Activated CD4-positive, alpha-beta memory T cell treated with anti-CD3 and anti-CD28 coated beads for 36 hours (primary cell): ENCODE measurements at regions of chr6 and their contacts with region 1.

Region 1: GRCh38 chr6:87210979-87211378 is 55.6 kb downstream of the ZNF292 start:
- DNase-seq: peak; percentile 68
- H3K4me3 Mint-ChIP-seq: no peak overlapping the region
- H3K27ac Mint-ChIP-seq: peak overlapping the region; percentile 79
- H3K4me1 Mint-ChIP-seq: peaks cover 71% of the 10 kb centered on the region
- H3K27me3 Mint-ChIP-seq: no peaks in the 10 kb centered on the region

Region 2: DNA sequence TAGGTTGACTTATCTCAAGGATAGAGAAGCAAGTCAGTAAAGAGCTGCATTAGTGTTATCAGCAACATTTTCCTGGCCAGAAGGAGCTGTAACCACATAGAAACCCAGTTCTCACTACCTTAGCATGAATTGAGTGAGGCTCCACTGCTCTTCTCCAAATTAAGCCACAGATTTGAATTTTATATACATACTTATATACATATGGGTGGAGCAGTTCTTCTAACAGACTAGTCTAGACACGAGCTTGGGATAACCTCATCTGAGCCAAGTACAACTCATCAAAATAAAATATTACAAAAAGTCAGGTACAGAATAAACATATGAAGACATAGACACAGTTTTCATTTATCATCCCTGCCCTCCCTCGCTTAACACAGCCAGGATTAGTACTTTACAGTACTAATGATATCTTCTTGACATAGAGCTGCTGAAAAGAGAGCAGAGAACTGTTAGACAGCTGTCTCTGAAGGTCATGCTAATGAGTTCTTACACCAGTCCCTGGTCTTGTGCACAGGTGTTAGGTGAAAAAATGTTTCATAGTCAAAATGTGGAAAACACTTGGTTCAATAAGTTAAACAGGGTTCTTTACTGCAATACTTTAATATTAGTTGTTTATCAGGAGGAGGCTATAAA is 421.1 kb before region 1 on chr6:
- CTCF ChIA-PET with region 1: no interaction called
- POLR2A ChIA-PET with region 1: no interaction called
- intact Hi-C with region 1: no loop called
- DNase-seq: no peak
- H3K4me3 Mint-ChIP-seq: no peak overlapping the region
- H3K27ac Mint-ChIP-seq: no peak overlapping the region
- H3K4me1 Mint-ChIP-seq: no peaks in the 10 kb centered on the region
- H3K27me3 Mint-ChIP-seq: no peaks in the 10 kb centered on the region

Region 3: GRCh38 chr6:87066449-87067333 is 144.3 kb before region 1 on chr6:
- CTCF ChIA-PET with region 1: no interaction called
- POLR2A ChIA-PET with region 1: no interaction called
- intact Hi-C with region 1: no loop called
- DNase-seq: peak; percentile 51
- H3K4me3 Mint-ChIP-seq: no peak overlapping the region
- H3K27ac Mint-ChIP-seq: no peak overlapping the region
- H3K4me1 Mint-ChIP-seq: peaks cover 2% of the 10 kb centered on the region
- H3K27me3 Mint-ChIP-seq: peaks cover 2% of the 10 kb centered on the region

Region 4: GRCh38 chr6:87174078-87174579 is 36.9 kb before region 1 on chr6:
- CTCF ChIA-PET with region 1: no interaction called
- POLR2A ChIA-PET with region 1: no interaction called
- intact Hi-C with region 1: loop called (anchors 5 kb)
- DNase-seq: no peak
- H3K4me3 Mint-ChIP-seq: no peak overlapping the region
- H3K27ac Mint-ChIP-seq: peak overlapping the region; percentile 23
- H3K4me1 Mint-ChIP-seq: peaks cover 77% of the 10 kb centered on the region
- H3K27me3 Mint-ChIP-seq: no peaks in the 10 kb centered on the region

Region 5: DNA sequence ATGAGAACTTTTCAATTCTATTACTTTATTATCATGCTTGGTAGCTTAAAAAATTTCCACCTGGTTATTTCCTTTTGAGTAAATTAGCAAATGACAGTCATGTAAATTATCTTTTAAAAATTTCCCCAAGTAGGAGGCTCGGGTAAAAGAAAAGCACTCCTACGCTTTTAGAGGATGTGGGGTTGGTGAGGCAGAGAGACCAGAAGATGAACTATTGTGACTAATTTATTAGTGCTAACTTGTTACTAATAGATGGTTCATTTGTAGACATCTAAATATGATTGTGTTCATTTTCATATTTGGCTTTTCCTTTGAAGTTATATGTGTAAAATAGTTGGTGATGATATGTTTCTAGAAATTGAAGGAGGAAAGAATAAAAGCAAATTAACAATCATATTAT is 28.7 kb before region 1 on chr6:
- CTCF ChIA-PET with region 1: no interaction called
- POLR2A ChIA-PET with region 1: no interaction called
- intact Hi-C with region 1: loop called (anchors 1 kb)
- DNase-seq: peak; percentile 46
- H3K4me3 Mint-ChIP-seq: peak overlapping the region; percentile 37
- H3K27ac Mint-ChIP-seq: peak overlapping the region; percentile 84
- H3K4me1 Mint-ChIP-seq: peaks cover 79% of the 10 kb centered on the region
- H3K27me3 Mint-ChIP-seq: no peaks in the 10 kb centered on the region

Region 6: DNA sequence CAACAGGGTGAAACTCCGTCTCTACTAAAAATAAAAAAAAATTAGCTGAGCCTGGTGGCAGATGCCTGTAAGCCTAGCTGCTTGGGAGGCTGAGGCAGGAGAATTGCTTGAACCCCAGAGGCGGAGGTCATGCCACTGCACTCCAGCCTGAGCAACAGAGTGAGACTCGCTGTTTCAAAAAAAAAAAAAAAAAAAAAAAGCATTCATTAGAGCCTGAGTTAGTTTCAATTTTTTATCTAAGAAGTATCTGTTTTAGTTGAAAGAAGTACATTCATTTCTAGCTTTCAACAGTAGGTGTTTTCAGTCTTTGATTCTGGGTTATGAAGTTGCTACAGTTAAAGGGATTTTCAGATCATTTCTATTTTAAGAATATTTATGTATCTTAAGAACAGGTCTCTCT is 13.4 kb before region 1 on chr6:
- CTCF ChIA-PET with region 1: no interaction called
- POLR2A ChIA-PET with region 1: no interaction called
- intact Hi-C with region 1: loop called (anchors 1 kb)
- DNase-seq: peak; percentile 49
- H3K4me3 Mint-ChIP-seq: no peak overlapping the region
- H3K27ac Mint-ChIP-seq: peak overlapping the region; percentile 38
- H3K4me1 Mint-ChIP-seq: peaks cover 67% of the 10 kb centered on the region
- H3K27me3 Mint-ChIP-seq: no peaks in the 10 kb centered on the region

Region 7: DNA sequence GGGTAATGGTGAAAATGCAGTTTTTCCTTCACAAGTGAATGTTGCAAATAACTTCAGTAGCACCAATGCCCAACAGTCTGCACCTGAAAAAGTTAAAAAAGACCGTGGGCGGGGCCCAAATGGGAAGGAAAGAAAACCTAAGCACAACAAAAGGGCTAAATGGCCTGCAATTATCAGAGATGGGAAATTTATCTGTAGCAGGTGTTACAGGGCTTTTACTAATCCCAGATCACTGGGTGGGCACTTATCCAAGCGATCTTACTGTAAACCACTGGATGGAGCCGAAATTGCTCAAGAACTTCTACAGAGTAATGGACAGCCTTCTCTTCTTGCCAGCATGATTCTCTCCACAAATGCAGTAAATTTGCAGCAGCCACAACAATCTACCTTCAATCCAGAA is 46.6 kb after region 1 on chr6:
- CTCF ChIA-PET with region 1: no interaction called
- POLR2A ChIA-PET with region 1: no interaction called
- intact Hi-C with region 1: no loop called
- DNase-seq: no peak
- H3K4me3 Mint-ChIP-seq: no peak overlapping the region
- H3K27ac Mint-ChIP-seq: no peak overlapping the region
- H3K4me1 Mint-ChIP-seq: peaks cover 12% of the 10 kb centered on the region
- H3K27me3 Mint-ChIP-seq: no peaks in the 10 kb centered on the region

Region 8: GRCh38 chr6:87837444-87837843 is 626.5 kb after region 1 on chr6:
- CTCF ChIA-PET with region 1: no interaction called
- POLR2A ChIA-PET with region 1: no interaction called
- intact Hi-C with region 1: no loop called
- DNase-seq: no peak
- H3K4me3 Mint-ChIP-seq: no peak overlapping the region
- H3K27ac Mint-ChIP-seq: no peak overlapping the region
- H3K4me1 Mint-ChIP-seq: peaks cover 2% of the 10 kb centered on the region
- H3K27me3 Mint-ChIP-seq: peaks cover 6% of the 10 kb centered on the region